CD8-positive, alpha-beta T cell (primary cell): ENCODE measurements at regions of chr17 and their contacts with region 1.

Region 1: DNA sequence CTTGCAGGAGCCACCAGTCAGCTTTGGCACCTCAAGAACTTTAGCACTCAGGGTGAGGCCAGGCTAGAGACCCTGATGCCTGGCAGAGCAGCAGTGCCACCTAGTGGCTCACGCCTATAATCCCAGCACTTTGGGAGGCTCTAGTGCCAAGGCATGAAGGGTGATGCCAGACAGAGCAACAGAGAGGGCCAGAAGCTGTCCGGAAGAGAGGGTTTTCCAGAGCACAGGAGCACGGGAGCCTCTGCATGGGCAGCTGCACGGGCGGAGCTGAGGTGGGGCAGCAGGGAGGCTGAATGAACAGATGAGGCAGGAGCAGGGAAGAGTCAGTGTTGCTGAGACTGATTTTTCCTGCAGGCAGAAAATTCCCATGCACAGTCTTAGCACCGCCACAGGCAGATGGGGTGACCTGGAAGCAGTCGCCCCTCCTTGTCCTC is 38.9 kb downstream of the MYH3 start:
- DNase-seq: peak; percentile 21 to 72 (median 50)
- ATAC-seq: peak; percentile 79
- H3K4me3 ChIP-seq: no peak overlapping the region
- H3K4me3 Mint-ChIP-seq: no peak overlapping the region
- H3K27ac ChIP-seq: no peak overlapping the region
- H3K27ac Mint-ChIP-seq: no peak overlapping the region
- H3K4me1 ChIP-seq: no peaks in the 10 kb centered on the region
- H3K4me1 Mint-ChIP-seq: no peaks in the 10 kb centered on the region
- H3K27me3 ChIP-seq: no peaks in the 10 kb centered on the region
- H3K27me3 Mint-ChIP-seq: peaks cover 5% of the 10 kb centered on the region
- CTCF ChIP-seq: peak; percentile 73

Region 2: DNA sequence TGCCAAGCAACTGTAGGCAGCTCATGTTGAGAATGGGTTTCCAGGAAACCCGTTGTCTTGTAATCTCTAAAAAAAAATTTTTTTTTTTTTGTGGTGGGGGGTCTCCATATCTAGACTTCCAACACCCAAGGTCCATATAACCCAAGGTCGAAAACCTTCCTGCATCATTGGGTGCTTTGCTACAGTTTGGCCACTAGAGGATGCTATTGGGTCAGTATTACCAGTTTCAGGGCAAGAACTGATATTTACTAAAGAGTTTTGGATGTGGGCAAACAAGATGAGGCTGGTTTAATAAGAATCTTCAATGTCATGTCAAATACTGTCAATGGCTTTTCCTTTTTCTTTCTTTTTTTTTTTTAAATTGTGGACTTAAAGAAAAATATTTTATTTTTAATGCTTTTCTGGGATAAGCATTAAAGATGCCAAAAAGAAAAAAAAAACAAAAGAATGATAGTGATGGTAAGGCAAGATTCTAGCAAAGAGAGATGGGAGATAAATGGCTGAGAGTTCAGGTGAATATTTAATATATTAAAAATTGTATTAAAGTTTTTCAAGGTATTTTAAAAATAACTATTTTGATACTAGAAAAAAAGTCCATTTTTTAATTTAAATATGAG is 889.1 kb before region 1 on chr17:
- CTCF ChIA-PET with region 1: no interaction called
- POLR2A ChIA-PET with region 1: no interaction called
- intact Hi-C with region 1: loop called in 1 of 2 experiments (anchors 10 kb)
- DNase-seq: peak in 2 of 9 experiments; percentile 44 to 53
- ATAC-seq: no peak
- H3K4me3 ChIP-seq: no peak overlapping the region
- H3K4me3 Mint-ChIP-seq: no peak overlapping the region
- H3K27ac ChIP-seq: no peak overlapping the region
- H3K27ac Mint-ChIP-seq: no peak overlapping the region
- H3K4me1 ChIP-seq: no peaks in the 10 kb centered on the region
- H3K4me1 Mint-ChIP-seq: no peaks in the 10 kb centered on the region
- H3K27me3 ChIP-seq: no peaks in the 10 kb centered on the region
- H3K27me3 Mint-ChIP-seq: peaks cover 8% of the 10 kb centered on the region
- CTCF ChIP-seq: peak; percentile 97

Region 3: GRCh38 chr17:9929871-9930270 is 688.3 kb before region 1 on chr17:
- CTCF ChIA-PET with region 1: interaction called, 55 read pairs
- POLR2A ChIA-PET with region 1: no interaction called
- intact Hi-C with region 1: loop called in 1 of 2 experiments (anchors 1 kb)
- DNase-seq: no peak
- ATAC-seq: no peak
- H3K4me3 ChIP-seq: no peak overlapping the region
- H3K4me3 Mint-ChIP-seq: no peak overlapping the region
- H3K27ac ChIP-seq: no peak overlapping the region
- H3K27ac Mint-ChIP-seq: no peak overlapping the region
- H3K4me1 ChIP-seq: no peaks in the 10 kb centered on the region
- H3K4me1 Mint-ChIP-seq: no peaks in the 10 kb centered on the region
- H3K27me3 ChIP-seq: no peaks in the 10 kb centered on the region
- H3K27me3 Mint-ChIP-seq: no peaks in the 10 kb centered on the region
- CTCF ChIP-seq: no peak

Region 4: GRCh38 chr17:10600571-10600970 is 17.6 kb before region 1 on chr17:
- CTCF ChIA-PET with region 1: interaction called, 18 read pairs
- POLR2A ChIA-PET with region 1: no interaction called
- intact Hi-C with region 1: no loop called
- DNase-seq: no peak
- ATAC-seq: no peak
- H3K4me3 ChIP-seq: no peak overlapping the region
- H3K4me3 Mint-ChIP-seq: no peak overlapping the region
- H3K27ac ChIP-seq: no peak overlapping the region
- H3K27ac Mint-ChIP-seq: no peak overlapping the region
- H3K4me1 ChIP-seq: no peaks in the 10 kb centered on the region
- H3K4me1 Mint-ChIP-seq: no peaks in the 10 kb centered on the region
- H3K27me3 ChIP-seq: peaks cover 0 to 4% of the 10 kb centered on the region in 2 experiments
- H3K27me3 Mint-ChIP-seq: peaks cover 11% of the 10 kb centered on the region
- CTCF ChIP-seq: no peak

Region 5: DNA sequence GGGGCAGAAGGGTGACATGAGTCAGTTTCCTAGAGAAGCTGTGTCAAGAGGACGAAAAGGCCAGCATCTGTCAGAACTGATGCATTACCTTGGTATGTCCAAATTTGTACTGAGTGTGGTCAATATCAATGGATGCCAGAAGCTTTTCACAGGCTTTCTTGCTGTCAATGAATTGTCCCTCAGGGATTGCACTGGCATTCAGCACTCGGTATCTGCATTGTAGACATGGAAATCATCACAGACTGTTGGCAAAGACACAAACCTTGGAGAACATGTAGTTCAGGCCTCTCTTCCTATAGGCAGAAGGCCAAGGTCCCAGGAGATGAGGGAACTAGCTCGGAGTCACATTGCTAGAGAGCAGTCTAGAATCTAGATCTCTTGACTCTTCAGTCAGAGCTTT is 22.3 kb after region 1 on chr17:
- CTCF ChIA-PET with region 1: interaction called, 33 read pairs
- POLR2A ChIA-PET with region 1: no interaction called
- intact Hi-C with region 1: no loop called
- DNase-seq: no peak
- ATAC-seq: no peak
- H3K4me3 ChIP-seq: no peak overlapping the region
- H3K4me3 Mint-ChIP-seq: no peak overlapping the region
- H3K27ac ChIP-seq: no peak overlapping the region
- H3K27ac Mint-ChIP-seq: no peak overlapping the region
- H3K4me1 ChIP-seq: no peaks in the 10 kb centered on the region
- H3K4me1 Mint-ChIP-seq: no peaks in the 10 kb centered on the region
- H3K27me3 ChIP-seq: no peaks in the 10 kb centered on the region
- H3K27me3 Mint-ChIP-seq: no peaks in the 10 kb centered on the region
- CTCF ChIP-seq: no peak